ENCODE measurements at regions of chr2 and their contacts with region 1.

Region 1: DNA sequence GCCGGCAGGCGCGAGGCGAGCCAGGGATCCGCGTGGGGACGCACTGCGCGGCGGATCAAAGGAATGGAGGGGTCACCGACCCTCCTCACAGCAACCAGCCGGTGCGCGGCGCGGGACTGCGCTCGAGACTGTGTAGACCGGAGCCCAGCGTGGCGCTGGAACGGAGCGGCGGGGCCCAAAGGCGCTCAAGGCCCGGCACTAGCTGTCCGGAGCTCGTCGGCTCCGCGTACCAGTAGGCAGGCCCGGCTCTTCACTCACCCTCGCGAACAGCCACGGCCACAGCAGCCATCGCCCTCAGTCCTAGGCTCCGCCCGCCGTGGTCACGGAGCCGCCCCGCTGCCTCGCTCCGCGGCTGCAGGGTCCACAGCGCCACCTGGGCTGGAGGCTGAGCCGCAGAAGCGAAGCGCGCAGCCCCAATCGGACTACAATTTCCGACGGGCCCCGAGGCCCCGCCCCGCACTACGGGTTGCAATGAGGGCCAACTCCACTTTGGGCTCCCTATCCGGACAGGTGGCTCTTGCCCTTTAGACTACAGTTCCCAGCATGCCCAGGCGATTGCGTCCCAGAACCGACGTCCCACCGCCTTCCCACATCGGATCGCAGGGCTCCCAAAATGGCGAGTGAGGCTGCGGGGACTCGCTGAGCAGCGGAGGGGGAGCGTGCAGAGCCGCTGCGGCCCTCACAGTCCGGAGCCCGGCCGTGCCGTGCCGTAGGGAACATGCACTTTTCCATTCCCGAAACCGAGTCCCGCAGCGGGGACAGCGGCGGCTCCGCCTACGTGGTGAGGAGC is at the starts of genes EIF2B4 and SNX17:
- DNase-seq: peak; percentile 96
- H3K4me3 ChIP-seq: peak within 1 kb of the TSS; percentile 97
- CTCF ChIP-seq: peak; percentile 91

Region 2: DNA sequence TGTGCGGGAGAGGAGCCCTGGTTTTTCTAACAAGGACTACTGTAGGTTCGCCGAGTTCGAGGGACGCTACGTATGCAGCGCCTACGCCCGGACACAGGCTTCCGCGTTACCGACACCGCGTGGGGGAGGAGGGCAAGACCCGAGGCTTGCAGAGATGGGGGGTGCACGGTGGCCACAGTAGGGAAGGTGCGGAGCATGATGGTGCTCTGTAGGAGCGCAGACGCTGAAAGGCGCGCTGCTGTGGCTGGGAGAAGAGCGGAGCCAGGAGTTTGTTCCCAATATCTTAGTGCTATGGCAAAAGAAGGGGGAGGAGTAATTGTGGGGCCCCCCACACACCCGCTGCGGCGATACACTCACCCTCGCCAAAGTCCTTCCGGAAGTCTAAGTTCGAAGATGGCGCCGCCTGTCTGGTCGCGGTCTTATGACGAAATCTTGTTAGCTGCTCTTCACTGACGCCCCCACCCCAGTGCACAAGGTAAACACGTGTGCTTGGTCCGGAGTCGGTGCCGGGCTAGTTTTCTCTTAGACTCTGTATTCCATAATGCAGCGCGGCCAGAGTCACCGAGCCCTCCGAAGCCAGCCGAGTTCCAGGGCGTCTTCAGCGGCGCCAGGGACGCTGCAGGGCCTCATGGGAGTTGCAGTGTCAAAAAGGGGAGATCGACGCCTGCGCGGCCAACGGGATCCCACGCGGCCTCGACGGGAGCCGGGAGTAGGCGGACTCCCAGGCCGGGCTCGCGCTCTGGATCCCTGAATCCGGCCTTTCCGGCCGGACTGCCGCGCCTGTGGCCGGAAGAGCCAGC is 13.6 kb before region 1 on chr2 and contains the start of gene GTF3C2:
- CTCF ChIA-PET with region 1: interaction called, 7 read pairs
- POLR2A ChIA-PET with region 1: interaction called, 24 read pairs
- DNase-seq: peak; percentile 82
- H3K4me3 ChIP-seq: peak within 1 kb of the TSS; percentile 90
- CTCF ChIP-seq: no peak

Region 3: GRCh38 chr2:27380626-27381545 is 10.7 kb after region 1 on chr2 and contains the start of gene ZNF513:
- CTCF ChIA-PET with region 1: interaction called, 14 read pairs
- POLR2A ChIA-PET with region 1: interaction called, 32 read pairs
- DNase-seq: peak; percentile 55
- H3K4me3 ChIP-seq: peak within 1 kb of the TSS; percentile 88
- CTCF ChIP-seq: no peak

Measured in AG04449 (cell line).